SK-N-SH (cell line): ENCODE measurements at regions of chr7 and their contacts with region 1.

Region 1: DNA sequence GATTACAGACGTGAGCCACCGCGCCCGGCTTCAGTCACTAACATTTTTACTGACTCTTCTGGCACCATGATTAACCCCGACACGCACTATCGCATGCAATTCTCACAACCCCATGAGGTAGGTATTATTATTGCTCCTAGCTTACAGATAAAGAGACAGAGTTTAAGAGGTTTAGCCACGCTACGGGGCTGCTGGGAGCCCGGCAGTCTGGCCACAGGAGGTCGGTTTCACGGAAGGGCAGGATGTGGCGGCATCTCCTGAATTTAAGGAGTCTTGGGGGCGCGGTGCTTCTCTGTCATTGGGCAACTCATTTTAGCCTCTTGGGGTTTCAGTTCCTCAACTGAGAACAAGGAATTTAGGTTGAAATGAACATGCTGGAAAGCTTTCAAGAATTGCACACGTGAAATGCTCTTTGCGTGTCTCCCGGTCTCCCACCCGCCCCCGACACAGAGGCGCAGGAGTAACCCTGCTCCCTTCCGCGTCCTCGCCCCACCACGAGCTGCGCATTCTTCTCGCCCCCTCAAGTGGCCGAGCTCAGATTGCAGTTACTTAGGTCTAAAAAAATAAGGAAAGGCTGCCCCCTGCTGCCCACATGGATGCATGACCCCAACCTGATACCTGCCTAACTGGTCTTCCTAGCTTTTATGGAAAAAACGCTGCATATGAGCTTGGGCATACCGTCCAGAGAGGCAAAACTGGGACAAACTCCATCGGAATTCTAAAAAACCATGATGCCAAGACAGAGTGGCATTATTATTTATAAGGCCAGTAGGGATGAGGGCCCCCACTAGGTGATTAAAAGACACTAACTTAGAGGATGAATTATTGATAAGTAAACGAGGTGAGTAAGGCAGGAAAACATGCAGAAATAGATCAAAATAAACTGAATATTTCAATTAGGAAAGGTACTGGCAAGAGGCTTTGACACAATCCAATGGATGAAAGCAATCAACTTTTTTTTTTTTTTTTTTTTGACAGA is 12.4 kb downstream of the PRSS2 start:
- DNase-seq: peak; percentile 90
- H3K4me3 ChIP-seq: peak overlapping the region; percentile 38 to 52
- H3K27ac ChIP-seq: no peak overlapping the region
- H3K4me1 ChIP-seq: no peaks in the 10 kb centered on the region; a peak in 1 of 4 replicates
- H3K27me3 ChIP-seq: 0 out of 2 replicates have a peak, but pooled peaks cover 3% of the 10 kb centered on the region
- CTCF ChIP-seq: peak; percentile 99
- EP300 ChIP-seq: peak in 1 of 2 experiments; percentile 40; a peak in 1 of 4 replicates
- RAD21 ChIP-seq: peak; percentile 100

Region 2: GRCh38 chr7:142485617-142486226 is 297.5 kb before region 1 on chr7:
- CTCF ChIA-PET with region 1: interaction called, 13 read pairs
- POLR2A ChIA-PET with region 1: no interaction called
- DNase-seq: peak; percentile 15
- H3K4me3 ChIP-seq: no peak overlapping the region
- H3K27ac ChIP-seq: no peak overlapping the region
- H3K4me1 ChIP-seq: peaks cover 0 to 2% of the 10 kb centered on the region in 2 experiments; a peak in 1 of 4 replicates
- H3K27me3 ChIP-seq: peaks cover 10% of the 10 kb centered on the region; the same call in 1 of the 2 replicates
- CTCF ChIP-seq: peak; percentile 56
- EP300 ChIP-seq: no peak
- RAD21 ChIP-seq: no peak

Region 3: DNA sequence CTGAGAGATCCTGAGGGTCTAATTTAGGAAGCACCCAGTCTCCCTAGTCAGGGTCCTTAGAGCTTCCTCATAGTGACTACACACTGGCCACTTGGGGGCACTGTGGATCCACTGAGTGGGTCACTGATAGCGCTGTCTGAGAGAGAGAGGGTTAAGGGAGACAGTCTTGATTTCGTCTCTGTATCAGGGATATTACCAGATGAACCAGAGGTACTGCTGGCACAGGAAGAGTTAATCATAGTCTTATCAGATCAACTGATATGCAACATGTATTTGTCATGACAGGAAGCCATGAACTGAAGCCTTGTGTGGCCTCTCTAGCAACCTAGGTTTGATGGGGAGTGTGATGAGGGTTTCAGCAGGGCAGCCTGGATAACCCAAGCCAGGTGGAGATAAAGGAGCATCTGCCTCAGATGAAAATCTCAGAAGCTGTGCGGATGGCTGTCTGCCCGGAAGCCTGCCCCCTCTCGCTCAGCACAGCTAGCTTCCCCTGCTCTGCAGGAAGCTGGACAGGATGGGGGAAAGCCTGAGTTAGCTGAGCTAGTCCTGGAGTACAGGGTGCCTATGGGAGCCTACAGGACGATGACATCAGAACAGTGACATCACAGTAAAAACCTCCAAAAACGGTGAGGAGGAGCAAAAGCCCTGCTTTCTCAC is 248.0 kb before region 1 on chr7:
- CTCF ChIA-PET with region 1: interaction called, 291 read pairs
- POLR2A ChIA-PET with region 1: interaction called, 11 read pairs
- DNase-seq: peak; percentile 80
- H3K4me3 ChIP-seq: peak overlapping the region; percentile 2 to 10; a peak in 3 of 4 replicates
- H3K27ac ChIP-seq: peak overlapping the region; percentile 14 to 99; a peak in 3 of 4 replicates
- H3K4me1 ChIP-seq: peaks cover 12 to 28% of the 10 kb centered on the region in 2 experiments; a peak in 3 of 4 replicates
- H3K27me3 ChIP-seq: no peaks in the 10 kb centered on the region
- CTCF ChIP-seq: peak; percentile 100
- EP300 ChIP-seq: peak; percentile 95 to 99
- RAD21 ChIP-seq: peak; percentile 100

Region 4: GRCh38 chr7:142632291-142633134 is 150.7 kb before region 1 on chr7:
- CTCF ChIA-PET with region 1: interaction called, 488 read pairs
- POLR2A ChIA-PET with region 1: interaction called, 12 read pairs
- DNase-seq: peak; percentile 87
- H3K4me3 ChIP-seq: no peak overlapping the region
- H3K27ac ChIP-seq: peak overlapping the region in 1 of 2 experiments; percentile 11; a peak in 1 of 4 replicates
- H3K4me1 ChIP-seq: no peaks in the 10 kb centered on the region; a peak in 2 of 4 replicates
- H3K27me3 ChIP-seq: peaks cover 14% of the 10 kb centered on the region; the same call in 1 of the 2 replicates
- CTCF ChIP-seq: peak; percentile 93
- EP300 ChIP-seq: no peak
- RAD21 ChIP-seq: peak; percentile 96

Region 5: DNA sequence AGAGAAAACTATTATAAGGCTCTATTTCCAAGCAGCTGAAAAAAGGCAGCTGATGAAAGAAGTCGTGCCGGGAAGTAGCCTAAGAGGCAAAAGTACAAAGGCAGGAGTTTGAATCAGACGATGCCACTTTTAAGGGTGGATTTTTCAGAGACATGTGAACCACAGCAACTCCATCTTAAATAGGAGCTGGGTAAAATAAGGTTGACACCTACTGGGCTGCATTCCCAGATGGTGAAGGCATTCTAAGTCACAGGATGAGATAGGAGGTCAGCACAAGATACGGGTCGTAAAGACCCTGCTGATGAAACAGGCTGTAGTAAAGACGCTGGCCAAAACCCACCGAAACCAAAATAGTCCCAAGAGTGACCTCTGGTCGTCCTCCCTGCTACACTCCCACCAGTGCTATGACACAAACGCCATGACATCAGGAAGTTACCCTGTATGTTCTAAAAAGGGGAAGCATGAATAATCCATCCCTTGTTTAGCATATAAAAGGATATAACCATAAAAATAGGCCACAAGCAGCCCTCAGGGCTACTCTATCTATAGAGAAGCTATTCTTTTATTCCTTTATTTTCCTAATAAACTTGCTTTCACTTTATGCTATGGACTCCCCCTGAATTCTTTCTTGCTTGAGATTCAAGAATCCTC is 79.4 kb before region 1 on chr7:
- CTCF ChIA-PET with region 1: interaction called, 13 read pairs
- POLR2A ChIA-PET with region 1: no interaction called
- DNase-seq: no peak
- H3K4me3 ChIP-seq: no peak overlapping the region
- H3K27ac ChIP-seq: no peak overlapping the region
- H3K4me1 ChIP-seq: no peaks in the 10 kb centered on the region
- H3K27me3 ChIP-seq: no peaks in the 10 kb centered on the region; the same call in 1 of the 2 replicates
- CTCF ChIP-seq: no peak
- EP300 ChIP-seq: no peak
- RAD21 ChIP-seq: no peak

Region 6: GRCh38 chr7:142760071-142760642 is 23.1 kb before region 1 on chr7:
- CTCF ChIA-PET with region 1: interaction called, 13 read pairs
- POLR2A ChIA-PET with region 1: no interaction called
- DNase-seq: no peak
- H3K4me3 ChIP-seq: no peak overlapping the region
- H3K27ac ChIP-seq: no peak overlapping the region
- H3K4me1 ChIP-seq: no peaks in the 10 kb centered on the region
- H3K27me3 ChIP-seq: peaks cover 58% of the 10 kb centered on the region
- CTCF ChIP-seq: no peak
- EP300 ChIP-seq: no peak
- RAD21 ChIP-seq: no peak

Region 7: DNA sequence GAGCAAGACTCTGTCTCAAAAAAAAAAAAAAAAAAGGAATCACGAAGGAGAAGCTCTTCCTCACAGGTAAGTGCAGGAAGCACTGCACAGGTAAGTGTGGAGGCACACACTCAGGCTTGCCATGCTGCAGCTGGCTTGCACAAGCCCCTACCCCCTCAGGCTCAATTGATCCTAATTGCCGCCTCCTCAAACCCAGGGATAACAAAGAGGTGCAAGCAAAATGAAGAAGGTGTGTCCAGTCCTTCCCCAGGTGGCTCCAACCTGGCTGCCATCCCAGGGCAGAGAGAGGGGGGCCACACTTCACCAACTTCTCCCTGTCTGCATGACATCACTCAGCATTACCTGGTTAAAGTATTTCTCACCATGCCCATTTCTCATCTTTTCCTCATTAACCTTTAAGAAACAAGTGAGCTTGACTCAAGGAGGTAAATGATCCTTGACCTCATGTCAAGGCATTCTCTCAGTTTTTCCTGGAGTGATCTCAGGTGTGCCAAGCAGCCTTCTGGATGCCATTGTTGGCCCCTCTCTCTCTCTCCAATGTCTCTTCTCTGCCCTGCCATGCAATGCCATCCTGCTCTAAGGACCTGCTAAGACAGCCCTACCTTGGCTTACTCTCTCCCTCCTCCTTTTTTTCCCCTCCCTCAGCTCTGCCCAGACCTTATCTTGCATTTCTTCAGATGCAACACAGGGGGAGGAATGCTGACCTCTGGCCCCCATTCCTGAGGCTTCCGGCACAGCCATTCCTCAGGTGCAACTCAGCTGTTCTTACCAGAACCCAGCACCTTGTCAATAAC is 115.4 kb after region 1 on chr7:
- CTCF ChIA-PET with region 1: no interaction called
- POLR2A ChIA-PET with region 1: no interaction called
- DNase-seq: no peak
- H3K4me3 ChIP-seq: no peak overlapping the region
- H3K27ac ChIP-seq: no peak overlapping the region
- H3K4me1 ChIP-seq: no peaks in the 10 kb centered on the region
- H3K27me3 ChIP-seq: peaks cover 43% of the 10 kb centered on the region
- CTCF ChIP-seq: no peak
- EP300 ChIP-seq: no peak
- RAD21 ChIP-seq: no peak